Dorsolateral prefrontal cortex (tissue), 120 donors: ENCODE measurements at regions of chr12 and their contacts with region 1.

Region 1: GRCh38 chr12:6752921-6753771 is at the start of gene MLF2:
- DNase-seq: peak; percentile 96 to 99 (median 98)
- H3K4me3 ChIP-seq: peak within 1 kb of the TSS; percentile 69 to 100 (median 97)
- H3K27ac ChIP-seq: peak within 1 kb of the TSS; percentile 68 to 100 (median 98)
- H3K27me3 ChIP-seq: no peaks in the 10 kb centered on the region
- CTCF ChIP-seq: peak in 29 of 56 donors; percentile 91 to 98 (median 96)
- total RNA-seq, gene MLF2: 139 to 384 (median 261) TPM

Region 2: DNA sequence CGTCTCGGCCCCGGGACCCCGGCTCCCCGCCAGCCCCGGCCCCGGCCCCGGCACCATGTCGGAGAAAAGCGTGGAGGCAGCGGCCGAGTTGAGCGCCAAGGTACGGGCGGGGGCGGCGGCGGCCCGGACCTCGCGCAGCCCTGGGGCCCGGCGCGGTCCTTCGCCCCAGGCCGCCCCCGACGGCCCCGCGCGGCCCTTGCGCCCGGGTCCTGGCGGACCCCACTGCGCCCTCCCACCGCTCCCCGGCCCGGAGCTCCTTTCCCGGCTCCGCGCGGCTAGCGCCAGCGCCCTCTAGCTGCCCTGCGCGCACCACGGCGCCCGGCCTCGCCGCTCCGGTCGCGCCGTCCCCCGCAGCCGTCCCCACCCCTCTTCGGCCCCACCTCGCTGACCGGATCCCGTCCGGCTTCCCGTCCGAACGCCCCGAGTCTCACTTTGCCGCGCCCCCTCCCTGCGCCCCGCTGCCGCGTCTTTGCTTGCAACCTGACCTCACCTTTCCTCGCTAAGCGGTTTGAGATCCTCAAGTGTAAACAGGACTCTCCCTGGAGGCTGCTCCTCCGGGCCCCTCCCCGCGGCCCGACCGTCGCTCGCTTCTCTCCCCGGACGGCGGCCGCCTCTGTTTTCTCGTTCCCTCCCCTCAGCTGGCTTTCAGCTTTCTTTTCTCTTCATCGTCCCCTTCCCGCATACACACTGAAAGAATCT is 13.7 kb after region 1 on chr12:
- intact Hi-C with region 1: loop called (anchors 2 kb)
- DNase-seq: peak in 7 of 10 donors; percentile 52 to 85 (median 65)
- H3K4me3 ChIP-seq: peak overlapping the region; percentile 35 to 85 (median 70)
- H3K27ac ChIP-seq: peak overlapping the region in 58 of 59 donors; percentile 39 to 99 (median 90)
- H3K27me3 ChIP-seq: no peaks in the 10 kb centered on the region
- CTCF ChIP-seq: peak in 54 of 56 donors; percentile 35 to 85 (median 60)

Region 3: GRCh38 chr12:6778574-6779550 is 25.7 kb after region 1 on chr12:
- intact Hi-C with region 1: loop called (anchors 1 kb)
- DNase-seq: peak; percentile 87 to 96 (median 92)
- H3K4me3 ChIP-seq: peak overlapping the region; percentile 6 to 72 (median 55)
- H3K27ac ChIP-seq: peak overlapping the region in 57 of 59 donors; percentile 11 to 90 (median 78)
- H3K27me3 ChIP-seq: peaks cover 0 to 12% (median 0%) of the 10 kb centered on the region in 45 donors
- CTCF ChIP-seq: peak; percentile 90 to 99 (median 98)

Region 4: DNA sequence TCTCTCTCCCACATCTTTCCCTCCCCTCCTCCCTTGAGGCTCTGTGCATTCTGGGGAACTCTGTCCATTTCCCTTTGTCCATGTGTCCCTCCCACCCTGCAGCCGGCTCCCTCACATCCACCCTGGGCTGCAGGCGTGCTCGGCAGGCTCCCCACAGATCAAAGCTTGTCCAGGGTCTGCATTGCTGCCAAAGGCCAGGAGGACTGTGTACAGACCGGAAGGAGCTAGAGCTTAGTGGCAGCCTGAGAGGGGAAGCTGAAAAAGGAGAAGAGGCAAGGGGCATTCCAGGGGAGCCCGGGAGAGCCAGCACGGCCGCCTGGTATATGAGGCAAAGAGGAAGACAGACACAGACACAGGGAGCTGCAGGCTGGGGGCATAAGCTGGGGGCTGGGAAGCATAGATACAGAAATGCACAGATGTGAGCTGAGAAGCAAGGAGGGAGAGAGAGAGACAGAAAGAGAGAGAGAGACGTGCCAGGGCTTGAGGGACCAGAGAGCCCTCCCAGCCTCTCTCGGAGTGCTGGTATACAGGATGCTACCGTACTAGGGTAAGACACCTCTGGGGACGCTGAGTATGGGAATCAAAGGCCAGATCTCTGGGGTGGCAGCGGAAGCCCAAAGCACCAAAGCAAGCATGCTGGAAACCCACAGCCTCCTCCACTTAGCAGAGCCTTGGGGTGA is 39.5 kb after region 1 on chr12:
- intact Hi-C with region 1: no loop called
- DNase-seq: peak in 4 of 10 donors; percentile 35 to 62 (median 42)
- H3K4me3 ChIP-seq: peak overlapping the region in 49 of 59 donors; percentile 1 to 51 (median 31)
- H3K27ac ChIP-seq: peak overlapping the region in 58 of 59 donors; percentile 24 to 90 (median 76)
- H3K27me3 ChIP-seq: no peaks in the 10 kb centered on the region
- CTCF ChIP-seq: no peak